Aorta (tissue), 5 donors: ENCODE measurements at regions of chr3 and their contacts with region 1.

Region 1: DNA sequence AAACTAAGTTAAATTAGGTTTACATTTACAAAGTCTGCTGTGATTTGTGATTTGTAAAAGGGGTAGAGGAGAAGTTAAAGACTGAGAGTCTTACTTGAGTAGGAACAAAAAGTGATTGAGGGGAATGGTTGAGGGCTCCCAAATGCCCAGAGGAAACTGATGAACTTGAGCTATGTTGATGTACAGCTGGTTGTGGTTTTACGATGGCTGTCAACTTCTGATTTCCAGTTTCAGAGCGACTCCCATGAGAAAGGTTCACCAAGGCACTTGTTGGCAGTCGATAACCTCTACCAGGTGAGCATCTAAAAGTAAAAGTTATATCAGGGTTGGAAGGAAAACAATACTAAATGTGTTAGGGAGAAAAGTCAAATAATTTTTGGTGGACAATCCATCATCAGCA is 91.0 kb downstream of the XRN1 start:
- DNase-seq: no peak
- ATAC-seq: no peak
- H3K4me3 ChIP-seq: no peak overlapping the region
- H3K27ac ChIP-seq: no peak overlapping the region
- H3K4me1 ChIP-seq: no peaks in the 10 kb centered on the region
- H3K27me3 ChIP-seq: no peaks in the 10 kb centered on the region

Region 2: GRCh38 chr3:142418926-142419592 is 62.2 kb after region 1 on chr3:
- intact Hi-C with region 1: loop called in 1 of 2 experiments (anchors 10 kb)
- DNase-seq: no peak
- ATAC-seq: no peak
- H3K4me3 ChIP-seq: no peak overlapping the region
- H3K27ac ChIP-seq: no peak overlapping the region
- H3K4me1 ChIP-seq: no peaks in the 10 kb centered on the region
- H3K27me3 ChIP-seq: no peaks in the 10 kb centered on the region